H1 (cell line): ENCODE measurements at regions of chr10 and their contacts with region 1.

Region 1: GRCh38 chr10:105063796-105064195 is 422.7 kb downstream of the SORCS3 start:
- DNase-seq: peak; percentile 38 to 71
- H3K4me3 ChIP-seq: no peak overlapping the region
- H3K27ac ChIP-seq: no peak overlapping the region
- H3K4me1 ChIP-seq: no peaks in the 10 kb centered on the region
- H3K27me3 ChIP-seq: no peaks in the 10 kb centered on the region
- CTCF ChIP-seq: peak; percentile 83 to 96 (median 95)
- EP300 ChIP-seq: no peak
- POLR2A ChIP-seq: no peak
- RAD21 ChIP-seq: peak; percentile 99

Region 2: DNA sequence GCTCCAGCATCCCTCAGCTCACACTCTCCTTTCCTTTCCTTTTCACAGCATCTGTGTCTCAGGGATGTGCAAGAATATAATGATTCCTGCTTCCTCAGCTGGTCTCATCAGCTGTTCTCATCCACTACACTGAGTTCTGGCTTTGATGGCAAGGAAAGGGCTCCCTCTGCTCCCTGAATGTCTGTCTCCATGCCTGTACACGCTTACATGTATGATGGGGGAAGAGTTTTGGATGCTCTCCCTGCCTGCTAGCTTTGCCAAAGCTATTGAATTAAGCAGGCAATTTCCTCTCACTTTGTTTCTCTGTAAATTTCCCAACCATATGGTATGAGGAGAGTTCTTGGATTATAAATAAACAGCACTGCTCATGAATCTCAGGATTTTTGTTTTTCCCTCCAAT is 168.3 kb before region 1 on chr10:
- CTCF ChIA-PET with region 1: no interaction called
- POLR2A ChIA-PET with region 1: no interaction called
- DNase-seq: no peak
- H3K4me3 ChIP-seq: no peak overlapping the region
- H3K27ac ChIP-seq: no peak overlapping the region
- H3K4me1 ChIP-seq: no peaks in the 10 kb centered on the region
- H3K27me3 ChIP-seq: no peaks in the 10 kb centered on the region
- CTCF ChIP-seq: no peak
- EP300 ChIP-seq: no peak
- POLR2A ChIP-seq: no peak
- RAD21 ChIP-seq: no peak

Region 3: GRCh38 chr10:104966563-104967297 is 97.1 kb before region 1 on chr10:
- CTCF ChIA-PET with region 1: interaction called, 10 read pairs
- POLR2A ChIA-PET with region 1: no interaction called
- DNase-seq: no peak
- H3K4me3 ChIP-seq: no peak overlapping the region
- H3K27ac ChIP-seq: no peak overlapping the region
- H3K4me1 ChIP-seq: no peaks in the 10 kb centered on the region
- H3K27me3 ChIP-seq: peaks cover 0 to 2% (median 0%) of the 10 kb centered on the region in 4 experiments; a peak in 1 of 7 replicates
- CTCF ChIP-seq: no peak
- EP300 ChIP-seq: no peak
- POLR2A ChIP-seq: no peak
- RAD21 ChIP-seq: no peak

Region 4: DNA sequence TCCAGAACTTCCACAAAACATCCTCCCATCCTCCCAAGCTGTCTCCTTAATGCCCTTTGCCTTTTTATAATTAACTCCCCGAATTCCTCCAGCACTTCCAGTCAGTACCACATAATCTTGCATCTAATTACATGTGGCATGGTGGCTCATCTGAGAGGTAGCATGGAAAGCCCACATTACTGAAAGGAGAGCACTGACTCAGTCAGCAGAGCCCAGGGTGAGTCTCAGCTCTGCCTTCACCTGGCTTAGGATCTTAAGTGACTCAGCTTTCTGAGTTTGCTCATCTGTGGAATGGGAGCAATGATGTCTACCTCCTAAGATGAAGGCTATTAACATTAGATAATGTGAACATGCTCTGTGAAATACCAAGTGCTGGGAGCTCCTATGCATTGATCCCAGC is 11.2 kb after region 1 on chr10:
- CTCF ChIA-PET with region 1: interaction called, 19 read pairs
- POLR2A ChIA-PET with region 1: no interaction called
- DNase-seq: no peak
- H3K4me3 ChIP-seq: no peak overlapping the region
- H3K27ac ChIP-seq: no peak overlapping the region
- H3K4me1 ChIP-seq: no peaks in the 10 kb centered on the region
- H3K27me3 ChIP-seq: no peaks in the 10 kb centered on the region
- CTCF ChIP-seq: no peak
- EP300 ChIP-seq: no peak
- POLR2A ChIP-seq: no peak
- RAD21 ChIP-seq: no peak

Region 5: DNA sequence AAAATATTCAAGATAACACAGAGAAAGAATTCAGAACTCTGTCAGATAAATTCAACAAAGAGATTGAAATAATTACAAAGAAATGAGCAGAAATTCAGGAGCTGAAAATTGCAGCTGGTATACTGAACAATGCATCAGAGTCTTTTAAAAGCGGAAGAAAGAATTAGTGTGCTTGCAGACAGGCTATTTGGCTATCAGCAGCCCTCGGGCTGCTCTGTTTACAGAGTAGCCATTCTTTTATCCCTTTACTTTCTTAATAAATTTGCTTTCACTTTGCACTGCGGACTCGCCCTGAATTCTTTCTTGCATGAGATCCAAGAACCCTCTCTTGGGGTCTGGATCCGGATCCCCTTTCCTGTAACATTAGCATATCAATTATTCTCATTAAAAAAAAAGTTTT is 617.3 kb after region 1 on chr10:
- CTCF ChIA-PET with region 1: interaction called, 10 read pairs
- POLR2A ChIA-PET with region 1: no interaction called
- DNase-seq: no peak
- H3K4me3 ChIP-seq: no peak overlapping the region
- H3K27ac ChIP-seq: no peak overlapping the region
- H3K4me1 ChIP-seq: peaks cover 0 to 8% (median 0%) of the 10 kb centered on the region in 4 experiments; a peak in 1 of 7 replicates
- H3K27me3 ChIP-seq: no peaks in the 10 kb centered on the region
- CTCF ChIP-seq: no peak
- EP300 ChIP-seq: no peak
- POLR2A ChIP-seq: no peak
- RAD21 ChIP-seq: no peak

Region 6: DNA sequence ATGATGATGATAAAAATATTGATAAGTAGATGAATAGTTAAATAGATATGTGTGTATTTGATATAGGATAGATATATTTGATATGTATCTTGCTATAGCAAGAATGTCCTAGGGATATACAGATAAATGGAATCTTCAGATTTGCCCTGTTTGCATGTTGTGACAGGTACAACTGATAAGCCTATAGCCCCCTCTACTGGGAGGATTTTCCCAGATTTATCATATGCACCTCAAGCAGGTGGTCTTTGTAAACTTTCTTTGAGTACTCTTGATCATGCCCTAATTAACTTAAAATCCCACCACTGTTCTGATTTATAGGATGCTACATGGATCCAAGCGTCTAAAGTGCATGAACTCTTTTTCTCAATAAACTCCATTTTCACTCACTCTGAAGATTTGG is 628.0 kb after region 1 on chr10:
- CTCF ChIA-PET with region 1: interaction called, 85 read pairs
- POLR2A ChIA-PET with region 1: no interaction called
- DNase-seq: no peak
- H3K4me3 ChIP-seq: no peak overlapping the region
- H3K27ac ChIP-seq: no peak overlapping the region
- H3K4me1 ChIP-seq: peaks cover 0 to 3% (median 0%) of the 10 kb centered on the region in 4 experiments; a peak in 1 of 7 replicates
- H3K27me3 ChIP-seq: no peaks in the 10 kb centered on the region
- CTCF ChIP-seq: peak in 2 of 3 experiments; percentile 59 to 71; a peak in 3 of 4 replicates
- EP300 ChIP-seq: no peak
- POLR2A ChIP-seq: no peak
- RAD21 ChIP-seq: peak; percentile 96 to 97